WTC11 (cell line): ENCODE measurements at regions of chr18 and their contacts with region 1.

Region 1: DNA sequence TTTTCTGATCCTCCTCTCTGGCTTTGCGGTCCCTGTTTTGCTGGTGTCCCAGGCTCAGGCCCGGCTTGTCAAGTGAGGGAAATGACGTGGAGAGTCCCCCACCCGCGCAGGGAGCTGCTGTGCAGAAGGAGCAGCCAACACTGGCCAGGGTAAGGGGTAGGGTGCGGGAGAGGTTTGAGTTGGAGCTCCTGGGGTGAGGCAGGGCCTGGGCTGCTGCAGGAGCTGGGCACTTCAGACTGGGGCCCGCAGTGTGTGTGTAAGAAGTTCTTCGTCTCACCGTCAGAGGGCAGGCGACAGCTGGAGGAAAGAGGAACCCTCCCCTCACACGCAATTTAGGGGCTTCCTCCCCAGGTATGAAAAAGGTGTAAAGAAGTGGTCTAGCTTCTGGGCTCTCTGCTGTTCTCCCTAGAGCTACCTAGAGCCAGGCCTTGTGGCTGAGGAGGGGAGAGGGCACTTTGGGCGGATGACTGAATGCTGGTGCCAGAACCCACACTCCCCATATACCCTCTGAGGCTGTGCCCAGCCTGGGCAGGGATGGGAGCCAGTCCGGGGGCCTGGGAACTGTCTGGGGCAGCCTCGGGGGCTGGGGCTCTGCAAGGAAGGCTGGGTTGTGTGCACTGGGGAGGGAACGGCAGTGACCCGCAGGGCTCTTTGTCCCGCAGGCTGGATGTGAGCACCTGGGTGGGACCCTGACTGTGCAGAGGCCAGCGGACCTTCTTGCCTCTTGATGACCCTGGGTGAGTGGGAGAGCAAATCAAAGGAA is 11.8 kb downstream of the CELF4 start:
- DNase-seq: peak; percentile 69
- ATAC-seq: peak; percentile 81
- H3K4me3 Mint-ChIP-seq: peak overlapping the region; percentile 52
- H3K27ac Mint-ChIP-seq: no peak overlapping the region
- H3K4me1 Mint-ChIP-seq: peaks cover 17% of the 10 kb centered on the region
- H3K27me3 Mint-ChIP-seq: peaks cover 57% of the 10 kb centered on the region
- CTCF ChIP-seq: peak; percentile 43; the same call in 1 of the 2 replicates

Region 2: DNA sequence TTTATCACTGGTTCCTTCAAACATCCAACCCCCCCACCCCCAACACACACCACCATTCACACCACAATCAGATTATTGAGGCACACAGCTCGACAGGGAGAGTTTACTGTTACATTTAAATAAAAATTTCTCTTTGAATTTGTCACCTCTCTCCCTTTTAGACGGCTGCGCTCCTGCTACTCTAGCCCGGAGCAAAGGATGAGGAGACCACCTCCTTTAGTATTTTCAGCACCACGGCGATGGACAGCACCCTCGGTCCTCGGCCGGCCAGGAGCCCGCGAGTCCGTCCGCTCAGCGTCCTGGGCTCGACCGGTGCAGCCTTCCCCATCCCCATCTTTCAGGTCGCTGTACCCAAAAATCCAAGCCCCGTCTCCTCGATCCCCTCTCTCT is 10.9 kb after region 1 on chr18:
- CTCF ChIA-PET with region 1: interaction called, 14 read pairs
- POLR2A ChIA-PET with region 1: no interaction called
- DNase-seq: peak; percentile 90
- ATAC-seq: peak; percentile 65
- H3K4me3 Mint-ChIP-seq: peak overlapping the region; percentile 97
- H3K27ac Mint-ChIP-seq: no peak overlapping the region
- H3K4me1 Mint-ChIP-seq: peaks cover 26% of the 10 kb centered on the region
- H3K27me3 Mint-ChIP-seq: peaks cover 80% of the 10 kb centered on the region
- CTCF ChIP-seq: no peak

Region 3: GRCh38 chr18:37570336-37570930 is 16.6 kb after region 1 on chr18:
- CTCF ChIA-PET with region 1: interaction called, 14 read pairs
- POLR2A ChIA-PET with region 1: no interaction called
- DNase-seq: peak; percentile 43
- ATAC-seq: peak; percentile 78
- H3K4me3 Mint-ChIP-seq: no peak overlapping the region
- H3K27ac Mint-ChIP-seq: no peak overlapping the region
- H3K4me1 Mint-ChIP-seq: peaks cover 38% of the 10 kb centered on the region
- H3K27me3 Mint-ChIP-seq: peaks cover 69% of the 10 kb centered on the region
- CTCF ChIP-seq: no peak

Region 4: DNA sequence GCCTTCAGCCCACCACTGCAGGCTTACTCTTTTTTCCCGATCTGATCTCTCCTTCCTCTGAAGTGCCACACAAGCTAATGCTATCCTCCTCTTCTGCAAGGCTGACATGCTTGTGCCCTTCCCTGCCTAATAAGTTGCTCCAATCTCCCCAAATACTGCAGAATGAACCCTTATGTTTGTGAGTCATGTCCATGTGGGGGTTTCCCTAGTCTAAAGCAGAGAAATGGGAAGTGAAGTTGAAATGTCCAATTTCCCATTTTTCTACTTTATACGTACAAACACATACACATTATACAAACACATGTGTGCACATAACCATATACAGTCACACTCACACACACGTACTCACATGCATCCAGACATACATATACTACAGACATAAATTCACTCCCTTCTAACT is 299.9 kb after region 1 on chr18:
- CTCF ChIA-PET with region 1: no interaction called
- POLR2A ChIA-PET with region 1: no interaction called
- DNase-seq: no peak
- ATAC-seq: no peak
- H3K4me3 Mint-ChIP-seq: no peak overlapping the region
- H3K27ac Mint-ChIP-seq: no peak overlapping the region
- H3K4me1 Mint-ChIP-seq: peaks cover 4% of the 10 kb centered on the region
- H3K27me3 Mint-ChIP-seq: no peaks in the 10 kb centered on the region; the same call in 1 of the 2 replicates
- CTCF ChIP-seq: no peak